ENCODE measurements at regions of chr21 and their contacts with region 1.

Region 1: DNA sequence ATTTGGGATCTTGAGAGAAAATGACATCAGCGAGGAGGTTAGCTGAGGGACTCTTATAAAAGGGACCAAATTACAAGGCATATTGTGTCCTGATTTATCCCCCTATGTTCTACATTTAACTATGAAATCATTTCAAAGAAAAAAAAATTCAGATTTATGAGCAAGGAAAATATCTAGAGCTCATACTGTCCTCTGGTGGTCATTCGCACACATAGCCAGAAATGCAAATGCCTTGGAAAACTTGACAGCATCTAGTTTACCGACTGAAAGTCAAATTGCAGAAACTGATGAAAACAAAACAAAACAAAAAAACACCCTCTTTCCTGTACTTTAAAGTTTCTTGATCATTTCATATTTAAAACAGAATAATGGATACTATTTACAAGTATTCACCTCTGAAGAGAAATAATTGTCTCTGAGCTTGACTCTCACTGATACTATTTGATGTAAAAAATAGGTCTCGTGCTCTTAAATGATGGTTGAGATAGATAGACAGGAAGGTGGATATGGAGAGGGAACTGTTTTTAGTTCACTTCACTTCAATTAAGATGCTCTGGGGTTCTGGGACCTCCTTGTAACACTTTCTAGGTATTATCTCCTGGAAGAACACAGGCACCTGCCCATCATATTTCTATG is 253.8 kb downstream of the PCP4 start:
- DNase-seq: no peak
- H3K4me3 ChIP-seq: no peak overlapping the region
- H3K27ac ChIP-seq: no peak overlapping the region
- H3K4me1 ChIP-seq: peaks cover 0 to 7% (median 3%) of the 10 kb centered on the region in 4 donors
- H3K27me3 ChIP-seq: no peaks in the 10 kb centered on the region
- CTCF ChIP-seq: peak; percentile 90 to 92 (median 91)
- EP300 ChIP-seq: no peak
- POLR2A ChIP-seq: no peak

Region 2: GRCh38 chr21:39788383-39788782 is 332.7 kb before region 1 on chr21:
- intact Hi-C with region 1: loop called (anchors 2 kb)
- DNase-seq: peak; percentile 94
- H3K4me3 ChIP-seq: no peak overlapping the region
- H3K27ac ChIP-seq: peak overlapping the region; percentile 49 to 72 (median 58)
- H3K4me1 ChIP-seq: peaks cover 0 to 21% (median 13%) of the 10 kb centered on the region in 4 donors
- H3K27me3 ChIP-seq: no peaks in the 10 kb centered on the region
- CTCF ChIP-seq: peak; percentile 87 to 92 (median 90)
- EP300 ChIP-seq: peak; percentile 18
- POLR2A ChIP-seq: no peak

Region 3: DNA sequence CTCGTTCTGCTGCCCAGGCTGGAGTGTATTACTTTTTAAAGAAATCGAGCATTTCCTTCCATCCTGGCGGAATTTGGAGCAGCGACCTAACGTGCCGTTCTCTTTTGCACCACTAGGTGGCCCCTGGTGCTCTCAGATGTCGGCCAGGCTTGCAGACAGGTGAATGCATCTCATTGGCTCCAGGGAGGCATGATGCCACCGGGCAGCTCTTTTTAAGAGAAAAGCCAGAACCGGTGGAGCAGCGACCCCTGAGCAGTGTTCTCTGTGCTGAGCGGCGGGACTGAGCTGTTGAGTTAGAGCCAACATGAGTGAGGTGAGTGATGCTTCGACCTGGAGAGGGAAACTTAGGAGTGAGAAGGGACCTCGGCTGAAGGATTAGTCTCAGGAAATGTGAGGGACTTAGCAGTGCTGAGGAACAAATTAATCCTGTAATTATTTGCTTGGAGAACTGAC is 253.8 kb before region 1 on chr21 and contains the start of gene PCP4:
- intact Hi-C with region 1: loop called (anchors 2 kb)
- DNase-seq: no peak
- H3K4me3 ChIP-seq: peak within 1 kb of the TSS; percentile 45 to 66 (median 50)
- H3K27ac ChIP-seq: peak within 1 kb of the TSS; percentile 59 to 81 (median 68)
- H3K4me1 ChIP-seq: peaks cover 0 to 22% (median 19%) of the 10 kb centered on the region in 4 donors
- H3K27me3 ChIP-seq: no peaks in the 10 kb centered on the region
- CTCF ChIP-seq: peak; percentile 81 to 90 (median 89)
- EP300 ChIP-seq: no peak
- POLR2A ChIP-seq: peak; percentile 20
- total RNA-seq, gene PCP4: 82.0 to 172 (median 125) TPM

Region 4: GRCh38 chr21:40057331-40057730 is 63.7 kb before region 1 on chr21:
- intact Hi-C with region 1: loop called (anchors 5 kb)
- DNase-seq: no peak
- H3K4me3 ChIP-seq: no peak overlapping the region
- H3K27ac ChIP-seq: no peak overlapping the region
- H3K4me1 ChIP-seq: peaks cover 15 to 31% (median 28%) of the 10 kb centered on the region in 4 donors
- H3K27me3 ChIP-seq: no peaks in the 10 kb centered on the region
- CTCF ChIP-seq: no peak
- EP300 ChIP-seq: no peak
- POLR2A ChIP-seq: no peak

Region 5: GRCh38 chr21:40454057-40454456 is 333.0 kb after region 1 on chr21:
- intact Hi-C with region 1: no loop called
- DNase-seq: no peak
- H3K4me3 ChIP-seq: no peak overlapping the region
- H3K27ac ChIP-seq: no peak overlapping the region
- H3K4me1 ChIP-seq: no peaks in the 10 kb centered on the region
- H3K27me3 ChIP-seq: peaks cover 0 to 4% (median 0%) of the 10 kb centered on the region in 4 donors
- CTCF ChIP-seq: no peak
- EP300 ChIP-seq: no peak
- POLR2A ChIP-seq: no peak

Region 6: DNA sequence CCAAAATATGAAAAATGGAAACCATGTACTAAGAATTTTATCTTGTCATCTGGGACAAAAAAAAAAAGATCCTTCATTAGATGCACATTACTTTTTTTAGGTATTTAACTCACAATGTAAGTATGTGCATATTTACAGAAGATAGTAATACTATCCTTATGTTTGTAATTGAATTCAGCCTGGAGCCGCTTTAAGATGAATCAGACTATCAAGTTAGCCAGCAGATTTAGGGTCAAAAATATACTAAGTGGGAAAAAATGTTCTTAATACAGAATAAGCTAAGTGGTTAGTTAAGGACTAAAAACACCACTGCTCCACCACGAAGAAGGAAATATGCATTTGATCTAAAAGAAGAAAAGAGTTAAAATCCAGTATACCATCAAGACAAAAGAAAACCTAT is 676.8 kb after region 1 on chr21:
- intact Hi-C with region 1: no loop called
- DNase-seq: no peak
- H3K4me3 ChIP-seq: no peak overlapping the region
- H3K27ac ChIP-seq: no peak overlapping the region
- H3K4me1 ChIP-seq: no peaks in the 10 kb centered on the region
- H3K27me3 ChIP-seq: no peaks in the 10 kb centered on the region
- CTCF ChIP-seq: no peak
- EP300 ChIP-seq: no peak
- POLR2A ChIP-seq: no peak

Measured in esophagus muscularis mucosa (tissue), 4 donors.